Ascending aorta (tissue), 2 donors: ENCODE measurements at regions of chr17 and their contacts with region 1.

Region 1: GRCh38 chr17:42422958-42423712 is at the start of gene CAVIN1:
- DNase-seq: peak; percentile 85 to 99
- H3K4me3 ChIP-seq: peak within 1 kb of the TSS; percentile 92 to 100
- H3K27ac ChIP-seq: peak within 1 kb of the TSS; percentile 99 to 100
- H3K4me1 ChIP-seq: peaks cover 10 to 32% of the 10 kb centered on the region in 2 donors
- H3K27me3 ChIP-seq: no peaks in the 10 kb centered on the region
- CTCF ChIP-seq: no peak
- total RNA-seq, gene CAVIN1: 548 TPM

Region 2: DNA sequence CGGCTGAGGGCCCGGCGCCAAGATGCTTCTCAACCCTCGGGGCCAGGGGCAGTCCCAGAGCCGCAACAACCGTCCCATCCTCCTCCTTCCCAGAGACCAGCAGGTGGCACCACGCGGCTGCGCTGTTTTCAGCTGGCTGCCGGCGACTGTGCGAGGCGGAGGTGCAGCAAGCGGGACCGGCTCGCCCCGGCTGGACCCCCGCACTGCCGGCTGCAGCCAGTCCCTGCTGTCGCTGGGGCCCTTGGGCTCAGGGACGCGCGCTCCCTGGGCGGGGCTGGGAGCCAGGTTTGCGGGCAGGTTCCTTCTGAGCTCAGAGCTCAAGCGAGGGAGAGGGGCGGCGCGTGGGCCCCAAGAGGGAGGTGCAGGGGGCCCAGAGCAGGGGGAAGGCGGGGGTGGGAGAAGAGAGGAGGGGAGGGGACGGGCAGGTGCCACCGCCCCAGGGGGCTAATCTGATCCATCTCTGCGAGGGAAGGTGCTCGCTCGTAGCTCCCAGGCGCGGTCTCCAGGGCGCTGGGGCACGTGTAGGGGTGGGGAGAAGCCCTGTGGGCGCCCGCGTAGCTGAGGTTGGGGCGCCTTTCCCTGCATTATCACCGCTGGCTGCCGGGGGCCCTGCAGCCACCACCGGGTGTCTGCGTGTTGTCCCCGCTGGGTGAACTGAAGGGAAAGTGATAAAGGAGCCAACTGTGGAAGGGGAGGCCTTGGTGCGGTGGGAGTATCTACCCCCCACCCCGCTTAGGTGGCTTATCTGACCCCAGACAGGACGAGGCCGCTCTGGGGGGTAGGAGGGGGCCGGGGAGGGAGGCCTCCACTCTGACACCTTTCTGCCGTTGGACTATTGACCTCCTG is 110.6 kb before region 1 on chr17:
- intact Hi-C with region 1: no loop called
- DNase-seq: peak in 1 of 2 donors; percentile 90
- H3K4me3 ChIP-seq: peak overlapping the region; percentile 5 to 23
- H3K27ac ChIP-seq: peak overlapping the region; percentile 67 to 72
- H3K4me1 ChIP-seq: peaks cover 0 to 17% of the 10 kb centered on the region in 2 donors
- H3K27me3 ChIP-seq: no peaks in the 10 kb centered on the region
- CTCF ChIP-seq: peak; percentile 50 to 80 (median 71)

Region 3: DNA sequence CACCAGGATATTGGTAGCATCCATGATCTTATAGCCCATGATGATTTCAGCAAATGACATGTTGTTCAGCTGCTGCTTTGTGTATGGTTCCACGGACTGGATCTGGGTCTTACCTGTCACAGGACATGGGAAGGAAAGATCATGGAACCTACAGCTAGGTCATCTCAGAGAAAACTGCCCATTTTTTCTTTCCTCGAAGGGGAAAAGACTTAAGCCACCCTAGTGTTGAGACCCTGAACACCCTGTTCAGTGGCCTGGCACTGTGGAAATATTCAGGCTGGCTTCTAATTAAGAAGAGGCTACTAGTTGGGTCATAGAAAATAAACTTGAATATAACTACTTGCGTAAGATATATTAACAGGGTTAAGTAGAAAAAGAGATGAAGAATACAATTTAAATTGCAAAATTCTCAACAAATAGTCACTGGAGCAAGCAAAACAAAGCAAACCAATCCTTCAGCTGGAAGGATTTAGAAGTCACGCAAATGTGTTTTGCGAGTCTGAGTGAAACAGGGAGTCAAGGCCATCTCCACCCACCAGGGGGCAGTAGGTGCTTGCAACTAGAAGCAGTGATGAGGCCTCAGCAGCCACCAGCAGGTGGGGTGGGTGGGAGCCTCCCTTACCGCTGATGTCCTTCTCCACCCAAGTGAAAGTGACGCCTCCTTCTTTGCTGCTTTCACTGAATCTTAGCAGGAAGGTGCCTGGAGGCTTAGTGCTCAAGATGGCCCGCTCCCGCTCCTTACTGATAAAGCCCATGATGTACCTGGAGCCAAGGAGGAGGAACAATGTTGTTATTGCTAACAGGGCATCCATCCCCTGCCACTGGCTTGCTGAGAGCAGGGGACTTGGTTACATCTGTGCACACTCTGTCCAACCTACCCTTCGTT is 100.5 kb before region 1 on chr17:
- intact Hi-C with region 1: loop called (anchors 5 kb)
- DNase-seq: peak; percentile 63 to 97
- H3K4me3 ChIP-seq: no peak overlapping the region
- H3K27ac ChIP-seq: peak overlapping the region; percentile 6 to 48
- H3K4me1 ChIP-seq: peaks cover 0 to 6% of the 10 kb centered on the region in 2 donors
- H3K27me3 ChIP-seq: no peaks in the 10 kb centered on the region
- CTCF ChIP-seq: peak; percentile 94 to 99 (median 99)

Region 4: DNA sequence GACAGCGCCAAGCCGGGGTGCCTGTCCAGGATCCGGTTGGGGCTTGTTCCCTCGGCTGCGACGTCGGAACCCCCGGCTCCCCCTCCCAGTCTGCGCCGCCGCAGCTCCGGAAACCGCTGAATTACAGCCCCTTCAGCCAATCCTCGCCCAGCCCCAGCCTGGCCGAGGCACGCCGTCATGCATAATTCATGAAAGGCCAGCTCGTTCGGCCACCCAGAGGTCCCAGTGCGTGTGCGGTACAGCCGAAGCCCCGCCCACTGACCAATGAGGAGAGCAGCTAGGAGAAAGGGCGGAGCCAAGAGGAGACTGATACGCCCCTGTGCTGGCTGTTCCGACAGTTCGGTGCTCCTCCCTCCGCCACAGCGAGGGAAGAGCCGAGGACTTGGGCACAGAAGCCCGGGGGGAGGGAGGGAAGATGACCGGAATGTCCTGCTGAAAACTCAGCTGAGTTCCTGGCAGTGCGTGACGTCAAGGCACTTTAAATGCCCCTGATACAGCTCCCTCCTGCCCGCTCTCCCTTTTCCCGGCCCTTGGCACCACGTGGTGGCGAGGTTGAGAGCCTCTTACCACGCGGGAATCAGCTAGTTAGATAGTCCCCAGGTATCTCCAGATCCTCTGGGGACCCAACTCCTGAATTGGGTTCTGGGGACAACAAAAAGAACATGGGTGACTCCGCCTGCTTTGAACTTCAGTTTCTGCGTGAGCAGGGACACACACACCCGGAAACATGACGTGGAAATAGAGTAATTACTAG is 34.6 kb before region 1 on chr17 and contains the start of gene STAT3:
- intact Hi-C with region 1: loop called (anchors 1 kb)
- DNase-seq: peak; percentile 100
- H3K4me3 ChIP-seq: peak within 1 kb of the TSS; percentile 92 to 98
- H3K27ac ChIP-seq: peak within 1 kb of the TSS; percentile 100
- H3K4me1 ChIP-seq: peaks cover 0 to 21% of the 10 kb centered on the region in 2 donors
- H3K27me3 ChIP-seq: no peaks in the 10 kb centered on the region
- CTCF ChIP-seq: peak in 1 of 3 experiments; percentile 14
- total RNA-seq, gene STAT3: 181 TPM

Region 5: DNA sequence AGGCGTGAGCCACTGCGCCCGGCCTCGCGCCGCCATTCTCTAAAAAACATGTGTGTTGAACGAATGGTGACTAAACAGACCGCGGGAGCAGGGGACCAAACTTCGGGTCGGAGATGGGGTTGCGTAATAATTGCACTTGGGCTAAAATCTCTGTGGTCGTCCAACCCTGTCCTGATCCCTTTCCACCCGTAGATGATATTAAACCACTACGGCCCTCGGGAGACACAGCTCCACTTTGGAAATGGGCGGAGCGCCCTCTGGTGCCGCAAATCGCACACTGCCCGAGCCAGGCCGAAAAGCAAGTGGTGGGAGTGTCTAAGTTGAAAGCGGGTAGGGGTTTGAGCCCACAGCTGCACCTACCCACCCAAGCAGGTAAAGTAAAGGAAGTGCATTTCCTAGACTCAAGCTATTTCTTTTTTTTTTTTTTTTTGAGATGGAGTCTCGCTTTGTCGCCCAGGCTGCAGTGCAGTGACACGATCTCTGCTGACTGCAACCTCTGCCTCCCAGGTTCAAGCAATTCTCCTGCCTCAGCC is 17.1 kb before region 1 on chr17:
- intact Hi-C with region 1: loop called (anchors 1 kb)
- DNase-seq: peak in 1 of 2 donors; percentile 91
- H3K4me3 ChIP-seq: peak overlapping the region in 1 of 2 donors; percentile 2
- H3K27ac ChIP-seq: peak overlapping the region; percentile 76 to 84
- H3K4me1 ChIP-seq: peaks cover 33 to 59% of the 10 kb centered on the region in 2 donors
- H3K27me3 ChIP-seq: no peaks in the 10 kb centered on the region
- CTCF ChIP-seq: peak; percentile 84 to 90 (median 89)

Region 6: DNA sequence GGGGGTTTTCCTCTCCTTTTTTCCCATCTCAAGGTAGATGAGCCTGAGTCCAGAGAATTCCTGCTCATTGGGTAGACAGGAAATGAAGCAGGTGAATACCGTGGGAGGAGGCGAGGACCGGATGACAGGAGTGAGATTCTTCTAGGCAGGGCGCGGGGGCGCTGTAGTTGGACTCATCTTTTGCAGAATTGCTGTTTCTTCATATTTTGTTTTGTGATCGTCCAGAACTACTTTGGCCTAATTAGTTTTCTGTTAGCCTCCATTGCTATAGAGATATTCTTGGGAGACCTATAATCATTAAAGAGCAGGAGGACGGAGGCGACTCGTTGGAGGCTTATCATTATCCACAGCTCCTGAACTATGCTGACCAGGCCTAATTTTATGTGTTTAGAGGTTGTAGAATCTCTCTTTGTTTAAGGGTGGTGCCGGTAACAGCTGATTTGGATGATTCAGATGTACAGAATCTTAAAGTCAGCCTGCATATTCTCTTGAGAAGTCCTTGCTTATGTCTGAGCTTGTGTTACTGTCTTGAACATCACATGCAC is 36.2 kb after region 1 on chr17:
- intact Hi-C with region 1: loop called (anchors 2 kb)
- DNase-seq: peak in 1 of 2 donors; percentile 69
- H3K4me3 ChIP-seq: peak overlapping the region; percentile 76 to 90
- H3K27ac ChIP-seq: peak overlapping the region; percentile 92 to 98
- H3K4me1 ChIP-seq: peaks cover 4 to 24% of the 10 kb centered on the region in 2 donors
- H3K27me3 ChIP-seq: no peaks in the 10 kb centered on the region
- CTCF ChIP-seq: peak in 2 of 3 experiments; percentile 12 to 45

Region 7: GRCh38 chr17:42517516-42517915 is 94.4 kb after region 1 on chr17:
- intact Hi-C with region 1: loop called (anchors 2 kb)
- DNase-seq: peak; percentile 70 to 95
- H3K4me3 ChIP-seq: no peak overlapping the region
- H3K27ac ChIP-seq: peak overlapping the region; percentile 96 to 97
- H3K4me1 ChIP-seq: peaks cover 53 to 76% of the 10 kb centered on the region in 2 donors
- H3K27me3 ChIP-seq: no peaks in the 10 kb centered on the region
- CTCF ChIP-seq: peak; percentile 95 to 96 (median 95)

Region 8: DNA sequence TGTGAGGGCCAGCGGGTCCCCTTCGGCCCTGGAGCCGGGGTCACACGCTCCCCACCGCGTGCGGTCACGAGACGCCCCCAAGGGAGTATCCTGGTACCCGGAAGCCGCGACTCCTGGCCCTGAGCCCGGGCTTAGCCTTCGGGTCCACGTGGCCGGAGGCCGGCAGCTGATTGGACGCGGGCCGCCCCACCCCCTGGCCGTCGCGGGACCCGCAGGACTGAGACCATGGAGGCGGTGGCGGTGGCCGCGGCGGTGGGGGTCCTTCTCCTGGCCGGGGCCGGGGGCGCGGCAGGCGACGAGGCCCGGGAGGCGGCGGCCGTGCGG is 112.9 kb after region 1 on chr17 and contains the start of gene NAGLU:
- intact Hi-C with region 1: loop called (anchors 5 kb)
- DNase-seq: peak; percentile 83 to 97
- H3K4me3 ChIP-seq: peak within 1 kb of the TSS; percentile 72 to 79
- H3K27ac ChIP-seq: peak within 1 kb of the TSS; percentile 89 to 90
- H3K4me1 ChIP-seq: peaks cover 14 to 23% of the 10 kb centered on the region in 2 donors
- H3K27me3 ChIP-seq: no peaks in the 10 kb centered on the region
- CTCF ChIP-seq: no peak
- total RNA-seq, gene NAGLU: 94.7 TPM